ENCODE measurements at regions of chr16 and their contacts with region 1.

Region 1: GRCh38 chr16:11188801-11189740 is 66.9 kb downstream of the SOCS1 start:
- DNase-seq: no peak
- ATAC-seq: no peak
- H3K4me3 ChIP-seq: no peak overlapping the region
- H3K27ac ChIP-seq: no peak overlapping the region
- H3K4me1 ChIP-seq: peaks cover 0 to 6% (median 0%) of the 10 kb centered on the region in 12 donors
- H3K27me3 ChIP-seq: no peaks in the 10 kb centered on the region
- CTCF ChIP-seq: no peak
- POLR2A ChIP-seq: no peak

Region 2: DNA sequence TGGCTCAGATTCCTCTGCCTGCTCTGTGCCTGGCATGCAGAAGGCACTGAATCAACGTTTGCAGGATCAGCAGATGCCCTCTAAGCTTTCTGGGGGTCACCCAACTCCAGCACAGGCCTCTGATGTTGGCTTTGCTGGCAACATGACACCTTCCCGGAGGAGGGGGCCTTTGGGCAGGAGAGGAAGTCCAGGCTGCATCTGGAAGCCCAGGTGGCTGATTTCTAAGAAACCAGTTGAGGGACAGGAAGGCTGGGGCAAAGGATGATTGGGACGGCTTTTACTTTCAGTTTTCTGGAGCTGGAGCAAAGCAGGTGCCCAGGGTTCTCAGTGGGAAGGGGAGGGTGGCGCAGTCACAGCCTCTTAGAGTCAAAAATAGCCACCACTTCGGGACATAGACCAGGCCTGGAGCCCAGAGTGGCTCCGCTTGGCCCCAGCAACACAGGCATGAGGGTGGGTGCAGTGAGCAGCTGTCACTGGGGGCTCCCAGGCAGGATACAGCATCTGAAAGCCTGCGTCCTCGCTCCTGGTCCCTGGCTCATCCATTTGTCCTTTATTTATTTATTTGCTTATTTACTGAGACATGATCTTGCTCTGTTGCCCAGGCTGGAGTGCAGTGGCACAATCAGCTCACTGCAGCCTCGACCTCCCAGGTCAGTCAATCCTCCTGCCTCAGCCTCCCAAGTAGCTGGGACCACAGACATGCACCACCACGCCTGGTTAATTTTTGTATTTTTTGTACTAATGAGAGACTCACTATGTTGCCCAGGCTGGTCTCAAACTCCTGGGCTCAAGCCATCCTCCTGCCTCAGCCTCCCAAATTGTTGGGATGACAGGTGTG is 51.8 kb after region 1 on chr16:
- intact Hi-C with region 1: loop called in 1 of 10 experiments (anchors 2 kb)
- DNase-seq: peak; percentile 48 to 74 (median 52)
- ATAC-seq: peak; percentile 93 to 96 (median 96)
- H3K4me3 ChIP-seq: peak overlapping the region in 3 of 12 donors; percentile 14 to 15 (median 15)
- H3K27ac ChIP-seq: peak overlapping the region; percentile 44 to 86 (median 76)
- H3K4me1 ChIP-seq: peaks cover 0 to 24% (median 0%) of the 10 kb centered on the region in 12 donors
- H3K27me3 ChIP-seq: no peaks in the 10 kb centered on the region
- CTCF ChIP-seq: no peak
- POLR2A ChIP-seq: no peak

Region 3: DNA sequence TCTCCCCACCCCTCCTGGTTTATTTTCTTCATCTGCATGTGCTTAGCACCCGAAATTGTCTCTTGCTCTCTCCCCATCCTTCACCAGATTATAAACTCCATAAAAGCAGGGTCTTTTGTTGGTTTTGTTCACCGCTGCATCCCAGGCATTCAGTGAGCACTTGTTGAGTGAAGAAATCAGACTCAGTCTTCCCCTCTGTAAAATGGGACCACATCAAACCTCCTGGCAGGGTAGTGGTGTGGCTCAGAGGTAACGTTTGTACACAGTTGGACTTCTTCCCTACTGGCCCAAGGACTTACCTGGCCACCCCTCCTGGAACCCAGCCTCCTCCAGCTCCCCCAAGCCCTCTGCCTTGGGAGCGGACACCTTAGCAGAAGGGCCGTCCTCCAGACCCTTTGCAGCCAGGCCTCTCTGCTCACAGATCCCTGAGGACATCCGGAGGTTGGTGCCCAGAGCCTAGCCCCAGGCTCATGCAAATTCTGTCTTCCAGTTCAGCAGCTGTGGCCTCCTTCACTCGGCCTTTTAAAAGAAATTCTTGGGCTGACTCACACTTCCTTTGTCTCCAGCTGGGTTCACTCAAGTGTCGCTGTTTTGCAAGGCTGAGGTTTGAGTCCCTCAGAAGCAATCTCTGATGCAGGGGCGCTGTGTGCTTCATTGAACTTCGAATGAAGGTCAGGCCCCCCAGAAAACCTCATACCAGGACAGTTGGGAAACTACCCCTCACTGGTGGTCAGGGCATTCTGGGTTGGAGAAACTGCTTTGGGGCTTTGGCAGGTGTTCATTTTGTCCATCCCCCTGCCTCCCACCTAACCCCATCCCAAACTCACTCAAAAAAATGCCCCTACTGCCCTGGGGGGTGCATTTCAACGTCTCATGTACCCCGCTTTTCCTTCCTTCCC is 139.3 kb after region 1 on chr16:
- intact Hi-C with region 1: no loop called
- DNase-seq: peak; percentile 69 to 84 (median 80)
- ATAC-seq: peak; percentile 47 to 92 (median 88)
- H3K4me3 ChIP-seq: peak overlapping the region in 2 of 12 donors; percentile 6 to 10
- H3K27ac ChIP-seq: peak overlapping the region in 6 of 12 donors; percentile 13 to 84 (median 26)
- H3K4me1 ChIP-seq: peaks cover 0 to 50% (median 11%) of the 10 kb centered on the region in 12 donors
- H3K27me3 ChIP-seq: no peaks in the 10 kb centered on the region
- CTCF ChIP-seq: no peak
- POLR2A ChIP-seq: no peak

Measured in heart left ventricle (tissue), 16 donors.